Heart left ventricle (tissue), 16 donors: ENCODE measurements at regions of chr20 and their contacts with region 1.

Region 1: DNA sequence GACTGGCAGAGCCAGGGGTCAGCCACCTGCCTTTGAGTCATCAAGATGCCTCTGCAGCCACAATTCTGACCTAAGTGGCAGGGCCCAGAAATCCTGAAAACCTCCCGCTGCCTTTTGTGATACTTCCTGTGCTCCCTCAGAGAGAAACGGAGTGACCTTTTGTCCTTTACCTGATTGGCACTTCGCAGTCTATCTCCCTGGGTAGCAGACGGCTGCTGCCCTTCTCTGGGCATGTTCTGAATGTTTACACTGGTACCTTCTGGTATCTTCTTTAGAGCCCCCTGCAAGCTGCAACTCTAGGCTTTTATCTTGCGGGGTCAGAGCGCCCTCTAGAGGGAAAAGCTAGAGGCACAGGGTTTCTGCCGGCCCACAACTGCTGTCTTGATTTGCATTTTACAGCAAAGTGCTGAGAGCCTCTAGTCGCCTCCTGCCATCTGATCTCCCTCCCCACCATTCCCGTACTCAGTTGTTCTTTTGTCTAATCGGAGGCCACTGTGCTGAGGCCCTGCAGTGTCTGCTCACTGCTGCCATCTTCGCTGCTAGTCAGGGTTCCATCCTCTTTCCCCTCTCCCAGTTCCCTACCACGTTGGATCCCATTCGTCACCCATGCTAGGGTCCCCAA is 26.9 kb downstream of the SPATA2 start:
- DNase-seq: peak in 1 of 5 donors; percentile 65
- ATAC-seq: peak in 2 of 4 donors; percentile 8 to 9
- H3K4me3 ChIP-seq: no peak overlapping the region
- H3K27ac ChIP-seq: peak overlapping the region in 11 of 12 donors; percentile 35 to 79 (median 59)
- H3K4me1 ChIP-seq: peaks cover 0 to 70% (median 49%) of the 10 kb centered on the region in 12 donors
- H3K27me3 ChIP-seq: no peaks in the 10 kb centered on the region
- CTCF ChIP-seq: peak; percentile 63 to 79 (median 74)
- POLR2A ChIP-seq: no peak

Region 2: GRCh38 chr20:49928401-49929141 is 40.1 kb after region 1 on chr20:
- intact Hi-C with region 1: loop called in 1 of 10 experiments (anchors 5 kb)
- DNase-seq: peak; percentile 65 to 81 (median 73)
- ATAC-seq: peak; percentile 80 to 87 (median 83)
- H3K4me3 ChIP-seq: no peak overlapping the region
- H3K27ac ChIP-seq: peak overlapping the region in 2 of 12 donors; percentile 7 to 61
- H3K4me1 ChIP-seq: peaks cover 0 to 18% (median 1%) of the 10 kb centered on the region in 12 donors
- H3K27me3 ChIP-seq: no peaks in the 10 kb centered on the region
- CTCF ChIP-seq: peak; percentile 86 to 97 (median 92)
- POLR2A ChIP-seq: no peak